Left ventricle myocardium superior (tissue), 1 donor: ENCODE measurements at regions of chr3 and their contacts with region 1.

Region 1: DNA sequence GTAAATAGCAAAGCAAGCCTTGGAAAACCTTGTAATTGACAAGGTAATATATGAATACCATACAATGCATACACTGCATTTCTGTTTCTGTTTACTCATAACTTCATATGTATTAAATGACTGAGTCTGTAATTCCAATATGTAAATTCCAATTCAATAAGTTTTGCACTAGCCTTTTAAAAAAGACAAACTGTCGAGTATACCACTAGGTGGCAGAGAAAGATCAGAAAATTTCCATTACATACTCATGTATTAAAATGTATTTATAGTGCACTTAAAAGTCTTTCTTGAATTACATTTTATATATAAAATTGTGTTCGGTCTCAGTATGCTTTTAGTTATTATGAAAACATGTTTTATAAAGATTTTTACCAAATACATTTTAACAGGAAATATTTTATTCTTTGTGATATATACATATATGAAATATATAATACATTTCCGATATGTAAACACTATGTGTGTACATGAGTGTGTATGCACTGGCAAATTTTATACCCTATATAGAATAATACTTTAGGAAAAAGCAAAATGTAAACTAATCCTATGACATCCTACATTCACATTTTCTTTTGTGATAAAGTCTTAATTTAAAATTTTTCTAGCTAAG is 216.8 kb downstream of the VGLL3 start:
- DNase-seq: no peak
- ATAC-seq: no peak

Region 2: GRCh38 chr3:87167628-87168456 is 393.7 kb after region 1 on chr3:
- intact Hi-C with region 1: loop called (anchors 5 kb)
- DNase-seq: no peak
- ATAC-seq: no peak